ENCODE measurements at regions of chr11 and their contacts with region 1.

Region 1: DNA sequence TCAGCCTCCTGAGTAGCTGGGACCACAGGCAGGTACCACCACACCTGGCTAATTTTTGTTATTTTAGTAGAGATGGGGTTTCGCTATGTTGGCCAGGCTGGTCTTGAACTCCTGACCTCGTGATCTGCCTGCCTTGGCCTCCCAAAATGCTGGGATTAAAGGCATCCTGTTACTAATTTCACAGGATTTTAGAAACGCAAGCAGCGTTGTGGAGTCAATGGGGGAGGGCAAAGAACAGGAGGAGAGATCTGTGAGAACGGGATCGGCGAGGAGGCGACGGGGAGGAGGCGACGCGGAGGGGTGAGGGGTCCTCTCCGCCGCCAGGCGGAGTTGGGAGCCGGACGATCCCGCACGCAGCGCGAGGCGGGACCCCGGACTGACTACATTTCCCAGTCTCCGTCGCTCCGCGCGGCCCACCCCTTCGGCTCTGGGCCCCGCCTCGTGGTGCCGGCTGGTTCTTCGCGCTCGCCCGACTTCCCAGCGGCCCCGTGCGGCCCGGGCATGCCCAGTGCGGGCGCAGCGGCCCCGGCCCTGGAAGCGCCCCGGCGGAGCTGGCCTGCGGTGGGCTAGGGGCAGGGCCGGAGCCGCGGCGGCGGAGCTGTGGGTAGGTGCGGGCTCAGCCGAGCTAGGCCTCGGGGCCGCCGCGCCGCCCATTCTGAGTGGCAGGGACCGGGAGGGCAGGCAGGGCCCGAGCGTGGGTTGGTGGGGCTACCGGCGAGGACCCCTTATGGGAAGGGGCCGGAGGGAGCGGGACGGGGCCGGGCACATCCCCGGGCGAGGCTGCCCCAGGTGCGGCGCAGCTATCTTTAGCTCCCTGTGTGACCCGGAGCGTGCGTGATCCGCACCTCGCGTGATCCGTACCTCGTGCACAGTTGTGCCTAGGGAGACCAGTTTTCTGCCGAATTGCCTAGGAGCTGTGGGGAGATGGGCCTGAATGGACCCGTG is at the start of gene EI24:
- DNase-seq: peak; percentile 85 to 86
- ATAC-seq: peak; percentile 87 to 88
- H3K4me3 ChIP-seq: peak within 1 kb of the TSS; percentile 73 to 81 (median 73)
- H3K27ac ChIP-seq: peak within 1 kb of the TSS; percentile 90 to 95 (median 94)
- H3K4me1 ChIP-seq: peaks cover 18 to 20% of the 10 kb centered on the region in 2 donors
- H3K27me3 ChIP-seq: no peaks in the 10 kb centered on the region
- CTCF ChIP-seq: peak; percentile 60 to 81 (median 73)
- POLR2A ChIP-seq: peak; percentile 91
- total RNA-seq, gene EI24: 88.9 to 140 (median 127) TPM

Region 2: DNA sequence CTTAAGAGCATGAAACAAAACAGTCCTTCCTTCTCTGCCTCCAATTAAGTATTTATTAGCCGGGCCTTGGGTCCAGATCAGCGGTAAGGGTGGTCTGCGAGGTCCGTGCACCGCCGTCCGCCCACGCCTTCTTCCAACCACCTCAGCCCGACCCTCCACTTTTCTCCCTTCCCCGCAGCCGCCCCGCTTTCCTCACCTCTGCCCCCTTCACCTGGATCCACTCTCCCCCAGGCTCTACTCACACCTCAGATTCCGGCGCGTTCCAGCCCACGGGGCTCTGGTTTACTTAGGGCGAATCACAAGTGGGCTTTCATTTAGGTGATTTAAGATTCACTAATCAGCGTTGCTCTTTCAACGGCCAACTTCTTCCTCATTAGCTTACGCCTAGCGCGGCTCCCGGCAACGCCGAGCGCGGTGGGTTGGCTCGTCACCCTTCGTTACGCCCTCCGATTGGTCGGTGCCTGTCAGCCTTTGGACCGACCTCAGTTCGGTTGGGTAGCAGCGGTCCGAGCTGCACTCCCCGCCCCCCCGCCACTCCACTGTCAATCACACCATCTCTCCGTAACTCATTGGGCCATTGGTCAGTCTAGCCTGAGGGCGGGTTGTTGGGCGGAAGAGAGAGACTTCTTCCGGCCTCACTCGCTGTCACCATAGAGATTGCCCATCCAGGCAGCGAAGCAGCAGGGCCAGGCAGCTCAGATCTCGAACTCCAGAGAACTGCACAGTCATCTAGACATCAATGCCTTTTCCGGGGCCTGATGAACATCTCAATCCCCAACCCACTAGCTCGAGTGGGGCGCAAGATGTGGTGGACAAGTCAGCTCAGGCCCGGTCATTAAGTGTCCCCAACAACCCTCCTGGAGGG is 457.7 kb before region 1 on chr11 and contains the start of gene TMEM218:
- in situ Hi-C with region 1: loop called in 1 of 4 experiments (anchors 25 kb)
- intact Hi-C with region 1: no loop called
- DNase-seq: peak; percentile 99
- ATAC-seq: peak; percentile 98 to 99
- H3K4me3 ChIP-seq: peak within 1 kb of the TSS; percentile 86 to 97 (median 92)
- H3K27ac ChIP-seq: peak within 1 kb of the TSS; percentile 82 to 86 (median 84)
- H3K4me1 ChIP-seq: peaks cover 11 to 15% of the 10 kb centered on the region in 2 donors
- H3K27me3 ChIP-seq: peaks cover 0 to 3% (median 0%) of the 10 kb centered on the region in 3 donors
- CTCF ChIP-seq: no peak
- POLR2A ChIP-seq: no peak
- total RNA-seq, gene TMEM218: 6.3 to 11.2 (median 9.4) TPM

Region 3: DNA sequence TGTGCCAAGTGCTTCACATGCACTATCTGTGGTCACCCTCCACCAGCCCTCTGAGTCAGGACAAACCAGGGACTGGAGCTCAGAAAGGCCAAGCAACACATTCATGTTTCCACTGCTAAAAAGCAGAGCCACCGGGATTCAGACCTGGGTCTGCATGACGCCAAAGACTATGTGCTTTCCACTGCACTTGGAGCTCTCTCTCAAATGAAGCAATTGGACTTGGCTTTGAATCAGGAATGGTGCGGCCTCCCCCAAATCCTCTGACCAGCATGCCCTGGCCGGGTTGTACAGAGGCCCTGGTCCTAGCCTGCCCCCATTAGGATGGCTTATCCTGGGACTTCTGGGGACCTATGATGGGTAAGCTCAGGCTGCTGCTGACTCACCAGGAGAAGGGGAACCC is 323.9 kb before region 1 on chr11:
- in situ Hi-C with region 1: no loop called
- intact Hi-C with region 1: no loop called
- DNase-seq: no peak
- ATAC-seq: no peak
- H3K4me3 ChIP-seq: no peak overlapping the region
- H3K27ac ChIP-seq: no peak overlapping the region
- H3K4me1 ChIP-seq: peaks cover 0 to 3% of the 10 kb centered on the region in 2 donors
- H3K27me3 ChIP-seq: no peaks in the 10 kb centered on the region
- CTCF ChIP-seq: no peak
- POLR2A ChIP-seq: no peak

Region 4: GRCh38 chr11:125376117-125376516 is 193.1 kb before region 1 on chr11:
- in situ Hi-C with region 1: no loop called
- intact Hi-C with region 1: loop called (anchors 1 kb)
- DNase-seq: peak; percentile 89 to 96
- ATAC-seq: peak; percentile 83 to 84
- H3K4me3 ChIP-seq: peak overlapping the region in 1 of 4 donors; percentile 3
- H3K27ac ChIP-seq: peak overlapping the region; percentile 78 to 93 (median 90)
- H3K4me1 ChIP-seq: peaks cover 53 to 57% of the 10 kb centered on the region in 2 donors
- H3K27me3 ChIP-seq: no peaks in the 10 kb centered on the region
- CTCF ChIP-seq: no peak
- POLR2A ChIP-seq: peak in 1 of 2 donors; percentile 77

Region 5: GRCh38 chr11:125592305-125593112 is 23.3 kb after region 1 on chr11 and contains the start of gene STT3A:
- in situ Hi-C with region 1: no loop called
- intact Hi-C with region 1: loop called (anchors 1 kb)
- DNase-seq: peak; percentile 99 to 100
- ATAC-seq: peak; percentile 95 to 97
- H3K4me3 ChIP-seq: peak within 1 kb of the TSS; percentile 86 to 95 (median 90)
- H3K27ac ChIP-seq: peak within 1 kb of the TSS; percentile 89 to 99 (median 94)
- H3K4me1 ChIP-seq: peaks cover 17 to 24% of the 10 kb centered on the region in 2 donors
- H3K27me3 ChIP-seq: no peaks in the 10 kb centered on the region
- CTCF ChIP-seq: no peak
- POLR2A ChIP-seq: peak; percentile 86 to 90
- total RNA-seq, gene STT3A: 31.5 to 34.6 (median 32.9) TPM

Region 6: DNA sequence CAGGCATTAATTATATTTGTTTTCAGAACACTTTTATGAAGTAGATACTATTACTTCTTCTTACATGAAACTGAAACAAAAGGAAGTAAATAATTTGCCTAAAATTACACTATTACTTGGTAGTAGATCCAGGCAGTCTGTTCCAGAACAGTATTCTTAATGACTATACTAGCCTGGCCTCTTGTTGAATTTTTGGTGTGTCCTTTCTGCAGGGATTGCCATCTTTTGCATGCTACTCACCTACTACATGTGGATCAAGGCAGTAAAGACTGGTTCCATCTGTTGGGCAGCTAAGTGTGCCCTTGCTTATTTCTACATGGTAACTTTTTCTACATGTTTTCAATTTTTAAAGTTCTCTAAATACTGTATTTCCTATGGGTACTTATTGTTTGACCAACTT is 36.2 kb after region 1 on chr11:
- in situ Hi-C with region 1: no loop called
- intact Hi-C with region 1: loop called (anchors 5 kb)
- DNase-seq: no peak
- ATAC-seq: no peak
- H3K4me3 ChIP-seq: no peak overlapping the region
- H3K27ac ChIP-seq: no peak overlapping the region
- H3K4me1 ChIP-seq: peaks cover 0 to 3% of the 10 kb centered on the region in 2 donors
- H3K27me3 ChIP-seq: no peaks in the 10 kb centered on the region
- CTCF ChIP-seq: no peak
- POLR2A ChIP-seq: no peak